Activated CD4-positive, alpha-beta memory T cell treated with anti-CD3 and anti-CD28 coated beads, Interleukin-2, amount 10 ng/mL, durations not matched to agents 7 days and 5 days (primary cell): ENCODE measurements at regions of chr19 and their contacts with region 1.

Region 1: DNA sequence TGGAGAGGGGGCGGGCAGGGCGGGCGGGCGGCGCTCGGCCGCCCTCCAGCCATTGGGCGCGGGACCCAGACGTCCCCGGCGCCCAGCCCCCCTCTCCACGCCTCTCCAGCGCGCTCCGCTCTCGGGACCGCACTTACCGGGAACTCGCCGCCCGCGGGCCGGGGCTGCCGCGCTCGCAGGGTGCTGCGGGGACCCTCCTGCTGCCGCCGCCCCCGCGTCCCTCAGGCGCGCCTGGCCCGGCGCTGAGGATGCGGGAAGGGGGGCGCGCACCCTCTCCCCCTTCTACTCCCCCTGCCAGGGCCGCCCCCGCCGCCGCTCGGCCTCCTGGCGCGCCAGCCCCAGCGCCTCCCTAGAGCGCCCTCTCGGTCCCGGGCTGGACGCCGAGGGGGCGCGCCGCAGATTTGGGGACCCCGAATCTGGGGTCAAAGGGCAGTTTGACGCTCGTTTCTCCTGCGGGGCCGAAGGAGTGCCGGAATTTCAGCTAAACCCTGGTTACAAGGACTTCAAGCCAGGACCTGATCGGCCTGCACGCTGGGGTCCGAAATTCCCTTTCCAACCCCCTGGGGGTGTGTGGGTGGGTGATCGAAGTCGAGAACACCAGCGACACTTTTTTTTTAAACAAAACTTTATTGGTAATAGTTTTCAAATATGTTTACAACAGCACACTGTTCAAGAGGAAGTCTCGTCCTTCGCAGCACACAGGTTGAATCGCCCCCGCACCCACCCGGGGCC is 696 bp upstream of the SAMD1 start:
- DNase-seq: peak; percentile 80
- H3K4me3 Mint-ChIP-seq: peak overlapping the region; percentile 99
- H3K27ac Mint-ChIP-seq: peak overlapping the region; percentile 98
- H3K4me1 Mint-ChIP-seq: peaks cover 23% of the 10 kb centered on the region
- H3K27me3 Mint-ChIP-seq: no peaks in the 10 kb centered on the region

Region 2: GRCh38 chr19:13937479-13938300 is 153.6 kb before region 1 on chr19:
- CTCF ChIA-PET with region 1: no interaction called
- POLR2A ChIA-PET with region 1: no interaction called
- DNase-seq: no peak
- H3K4me3 Mint-ChIP-seq: no peak overlapping the region
- H3K27ac Mint-ChIP-seq: no peak overlapping the region
- H3K4me1 Mint-ChIP-seq: peaks cover 3% of the 10 kb centered on the region
- H3K27me3 Mint-ChIP-seq: peaks cover 7% of the 10 kb centered on the region

Region 3: DNA sequence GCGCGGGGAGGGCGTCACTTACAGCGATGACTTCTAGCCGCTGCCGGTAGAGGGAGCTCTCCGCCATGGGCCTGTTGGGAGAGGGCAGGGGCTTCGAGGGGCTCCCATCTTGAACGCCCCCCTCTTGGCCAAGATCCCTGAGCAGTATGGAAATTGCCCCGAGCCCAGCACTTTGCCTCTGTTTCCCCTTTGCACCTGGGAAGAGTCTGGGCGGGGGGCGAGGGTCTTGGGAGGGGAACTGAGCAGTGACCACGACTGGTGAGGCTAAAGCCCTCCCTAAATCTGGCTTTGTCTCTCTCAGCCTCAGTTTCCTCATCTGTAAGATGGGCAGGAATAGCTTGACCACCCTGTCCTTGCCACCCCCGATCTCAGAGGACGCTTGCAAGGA is 32.2 kb before region 1 on chr19:
- CTCF ChIA-PET with region 1: no interaction called
- POLR2A ChIA-PET with region 1: no interaction called
- DNase-seq: peak; percentile 53
- H3K4me3 Mint-ChIP-seq: no peak overlapping the region
- H3K27ac Mint-ChIP-seq: no peak overlapping the region
- H3K4me1 Mint-ChIP-seq: peaks cover 14% of the 10 kb centered on the region
- H3K27me3 Mint-ChIP-seq: peaks cover 34% of the 10 kb centered on the region

Region 4: DNA sequence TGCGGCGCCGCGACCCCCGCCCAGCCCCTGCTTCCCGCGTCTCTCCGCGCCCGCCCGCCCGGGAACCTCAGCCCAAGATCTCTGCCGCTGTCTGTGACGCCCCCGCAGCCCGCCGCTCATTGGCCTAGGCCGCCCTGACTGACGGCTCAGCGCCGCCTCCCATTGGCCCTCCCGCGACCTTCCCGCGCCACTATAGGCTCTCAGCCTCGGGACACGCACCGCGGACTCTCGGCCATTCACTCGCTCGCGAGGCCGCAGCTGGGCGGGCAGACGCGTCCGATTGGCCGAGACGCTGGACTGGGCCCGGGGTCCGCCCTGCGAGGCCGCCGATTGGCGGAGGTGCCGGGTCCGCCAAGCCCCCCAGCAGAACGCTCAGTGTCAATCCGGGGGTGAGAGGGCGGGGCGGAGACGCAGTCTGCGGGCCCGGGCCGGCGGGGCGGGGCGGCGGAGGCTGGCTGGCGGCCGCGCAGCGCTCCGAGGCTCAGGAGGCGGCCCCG is 26.5 kb after region 1 on chr19 and contains the start of gene PRKACA:
- CTCF ChIA-PET with region 1: interaction called, 11 read pairs
- POLR2A ChIA-PET with region 1: interaction called, 4 read pairs
- DNase-seq: peak; percentile 99
- H3K4me3 Mint-ChIP-seq: peak within 1 kb of the TSS; percentile 90
- H3K27ac Mint-ChIP-seq: peak within 1 kb of the TSS; percentile 65
- H3K4me1 Mint-ChIP-seq: peaks cover 46% of the 10 kb centered on the region
- H3K27me3 Mint-ChIP-seq: no peaks in the 10 kb centered on the region
- total RNA-seq, gene PRKACA: 48.1 to 49.8 TPM

Region 5: GRCh38 chr19:14237014-14237941 is 146.0 kb after region 1 on chr19:
- CTCF ChIA-PET with region 1: no interaction called
- POLR2A ChIA-PET with region 1: no interaction called
- DNase-seq: no peak
- H3K4me3 Mint-ChIP-seq: no peak overlapping the region
- H3K27ac Mint-ChIP-seq: no peak overlapping the region
- H3K4me1 Mint-ChIP-seq: peaks cover 16% of the 10 kb centered on the region
- H3K27me3 Mint-ChIP-seq: no peaks in the 10 kb centered on the region